ENCODE measurements at regions of chr7 and their contacts with region 1.

Region 1: GRCh38 chr7:151244196-151244840 is 4.2 kb downstream of the SMARCD3 start:
- DNase-seq: no peak
- H3K4me3 ChIP-seq: no peak overlapping the region
- H3K27ac ChIP-seq: no peak overlapping the region
- H3K27me3 ChIP-seq: no peaks in the 10 kb centered on the region
- CTCF ChIP-seq: peak; percentile 95

Region 2: GRCh38 chr7:151226875-151227782 is 17.2 kb before region 1 on chr7 and contains the start of gene ABCF2:
- CTCF ChIA-PET with region 1: interaction called, 64 read pairs
- POLR2A ChIA-PET with region 1: interaction called, 8 read pairs
- DNase-seq: peak; percentile 97
- H3K4me3 ChIP-seq: peak within 1 kb of the TSS; percentile 91
- H3K27ac ChIP-seq: peak within 1 kb of the TSS; percentile 81
- H3K27me3 ChIP-seq: no peaks in the 10 kb centered on the region
- CTCF ChIP-seq: no peak
- polyA plus RNA-seq, gene ABCF2: 31.0 and 39.0 TPM in 2 replicates

Region 3: DNA sequence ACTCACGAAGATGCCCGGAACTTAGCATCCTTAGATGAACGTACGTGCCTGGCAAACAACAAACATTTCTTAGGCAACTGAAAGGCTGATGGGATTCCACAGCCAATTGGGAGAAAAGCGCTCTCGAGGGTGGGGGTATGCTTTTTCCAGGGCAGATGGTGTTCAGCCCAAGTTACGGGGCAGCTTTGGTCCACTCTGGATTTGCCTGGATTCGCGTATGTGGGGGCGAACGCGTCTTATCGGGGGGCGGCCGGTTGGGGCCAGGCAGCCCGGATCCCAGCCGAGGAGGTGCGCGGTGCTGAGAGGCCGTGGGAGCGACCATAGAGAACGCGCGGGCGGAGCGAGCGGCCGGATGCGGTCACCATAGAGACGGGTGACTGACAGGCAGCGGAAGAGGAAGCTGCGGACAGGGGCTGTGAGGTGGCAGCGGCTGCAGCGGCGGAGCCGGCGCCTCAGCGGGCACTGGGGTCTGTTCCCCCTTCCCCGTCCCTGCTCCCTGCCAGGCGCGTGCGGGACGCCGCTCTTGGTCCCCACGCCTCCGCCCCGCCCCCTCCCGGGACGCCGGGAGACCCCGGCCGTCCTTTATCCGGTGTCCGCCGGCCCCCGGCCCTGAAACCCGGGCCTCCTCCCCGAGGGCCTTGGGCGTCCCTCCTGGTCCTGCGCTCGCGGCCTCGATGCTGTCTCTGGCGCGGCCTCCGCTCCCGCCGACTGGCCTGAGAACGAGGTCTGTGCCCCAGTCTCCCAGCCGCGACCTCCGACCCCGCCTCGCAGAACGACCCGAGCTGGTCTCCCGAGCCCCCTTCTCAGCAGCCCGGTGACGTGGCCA is 12.0 kb before region 1 on chr7 and contains the start of gene CHPF2:
- CTCF ChIA-PET with region 1: interaction called, 64 read pairs
- POLR2A ChIA-PET with region 1: interaction called, 8 read pairs
- DNase-seq: peak; percentile 56
- H3K4me3 ChIP-seq: peak within 1 kb of the TSS; percentile 96
- H3K27ac ChIP-seq: peak within 1 kb of the TSS; percentile 85
- H3K27me3 ChIP-seq: no peaks in the 10 kb centered on the region
- CTCF ChIP-seq: no peak
- polyA plus RNA-seq, gene CHPF2: 32.9 and 42.2 TPM in 2 replicates

Region 4: GRCh38 chr7:151256410-151257045 is 12.2 kb after region 1 on chr7:
- CTCF ChIA-PET with region 1: interaction called, 16 read pairs
- POLR2A ChIA-PET with region 1: interaction called, 5 read pairs
- DNase-seq: no peak
- H3K4me3 ChIP-seq: no peak overlapping the region
- H3K27ac ChIP-seq: no peak overlapping the region
- H3K27me3 ChIP-seq: peaks cover 39% of the 10 kb centered on the region
- CTCF ChIP-seq: no peak

Region 5: DNA sequence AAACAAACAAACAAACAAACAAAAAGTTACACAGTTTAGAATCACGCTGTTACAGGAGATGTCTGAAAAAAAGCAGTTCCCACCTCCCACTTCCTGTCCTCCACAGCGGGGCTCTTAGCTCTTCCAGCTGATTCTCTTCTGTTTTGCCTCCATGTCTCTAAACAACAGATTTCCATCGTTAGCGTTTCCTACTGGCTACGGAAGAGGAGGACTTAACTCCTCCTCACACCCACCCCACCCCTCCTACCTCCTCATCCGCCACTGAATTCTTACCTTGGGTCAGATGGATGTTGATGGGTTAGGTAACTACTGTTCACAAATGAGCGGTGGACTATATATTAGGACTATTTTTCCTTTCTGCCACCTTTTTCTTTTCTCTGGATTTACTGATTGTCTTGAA is 60.5 kb after region 1 on chr7:
- CTCF ChIA-PET with region 1: interaction called, 29 read pairs
- POLR2A ChIA-PET with region 1: no interaction called
- DNase-seq: no peak
- H3K4me3 ChIP-seq: peak overlapping the region; percentile 27; the same call in 1 of the 2 replicates
- H3K27ac ChIP-seq: no peak overlapping the region
- H3K27me3 ChIP-seq: peaks cover 16% of the 10 kb centered on the region
- CTCF ChIP-seq: no peak

Measured in AG04450 (cell line).